ENCODE measurements at regions of chr13 and their contacts with region 1.

Region 1: GRCh38 chr13:83386609-83387008 is 495.7 kb downstream of the SLITRK1 start:
- DNase-seq: no peak
- ATAC-seq: no peak
- H3K4me3 ChIP-seq: no peak overlapping the region
- H3K27ac ChIP-seq: no peak overlapping the region
- H3K4me1 ChIP-seq: no peaks in the 10 kb centered on the region
- H3K27me3 ChIP-seq: no peaks in the 10 kb centered on the region
- CTCF ChIP-seq: no peak

Region 2: DNA sequence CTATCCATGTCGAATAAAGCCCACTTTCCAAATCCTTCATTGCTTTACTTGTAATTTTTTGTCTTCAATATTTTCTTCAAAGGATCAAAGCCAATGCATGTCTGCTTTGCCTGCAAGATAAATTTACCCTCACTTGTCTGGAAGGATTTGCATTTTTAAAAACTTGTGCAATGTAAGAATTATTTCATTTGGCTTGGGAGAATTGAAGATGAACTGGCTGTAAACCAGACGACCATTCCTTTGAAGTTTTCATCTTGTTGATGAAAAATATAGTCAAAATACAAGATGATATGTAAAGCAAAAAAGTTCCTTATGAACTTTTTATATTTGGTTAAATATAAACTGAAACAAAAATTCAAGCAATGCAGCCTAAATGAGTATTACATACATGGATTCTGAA is 270.7 kb after region 1 on chr13:
- intact Hi-C with region 1: loop called in 1 of 10 experiments (anchors 5 kb)
- DNase-seq: no peak
- ATAC-seq: no peak
- H3K4me3 ChIP-seq: no peak overlapping the region
- H3K27ac ChIP-seq: no peak overlapping the region
- H3K4me1 ChIP-seq: no peaks in the 10 kb centered on the region
- H3K27me3 ChIP-seq: no peaks in the 10 kb centered on the region
- CTCF ChIP-seq: no peak